Heart right ventricle (tissue), 16 donors: ENCODE measurements at regions of chr20 and their contacts with region 1.

Region 1: GRCh38 chr20:63657937-63658748 is at the start of gene RTEL1:
- DNase-seq: peak; percentile 92
- ATAC-seq: peak; percentile 94 to 98 (median 96)
- H3K4me3 ChIP-seq: peak within 1 kb of the TSS; percentile 38 to 89 (median 72)
- H3K27ac ChIP-seq: peak within 1 kb of the TSS; percentile 73 to 95 (median 90)
- H3K4me1 ChIP-seq: peaks cover 8 to 36% (median 29%) of the 10 kb centered on the region in 9 donors
- H3K27me3 ChIP-seq: peaks cover 0 to 3% (median 0%) of the 10 kb centered on the region in 7 donors
- CTCF ChIP-seq: peak in 1 of 9 donors; percentile 25
- total RNA-seq, gene RTEL1: 6.1 to 14.5 (median 10.3) TPM

Region 2: GRCh38 chr20:63553227-63553932 is 104.8 kb before region 1 on chr20:
- intact Hi-C with region 1: no loop called
- DNase-seq: peak; percentile 85
- ATAC-seq: peak; percentile 74 to 91 (median 82)
- H3K4me3 ChIP-seq: peak overlapping the region in 9 of 10 donors; percentile 46 to 69 (median 64)
- H3K27ac ChIP-seq: peak overlapping the region in 4 of 10 donors; percentile 21 to 70 (median 39)
- H3K4me1 ChIP-seq: peaks cover 0 to 19% (median 10%) of the 10 kb centered on the region in 9 donors
- H3K27me3 ChIP-seq: peaks cover 0 to 53% (median 17%) of the 10 kb centered on the region in 7 donors
- CTCF ChIP-seq: no peak

Region 3: DNA sequence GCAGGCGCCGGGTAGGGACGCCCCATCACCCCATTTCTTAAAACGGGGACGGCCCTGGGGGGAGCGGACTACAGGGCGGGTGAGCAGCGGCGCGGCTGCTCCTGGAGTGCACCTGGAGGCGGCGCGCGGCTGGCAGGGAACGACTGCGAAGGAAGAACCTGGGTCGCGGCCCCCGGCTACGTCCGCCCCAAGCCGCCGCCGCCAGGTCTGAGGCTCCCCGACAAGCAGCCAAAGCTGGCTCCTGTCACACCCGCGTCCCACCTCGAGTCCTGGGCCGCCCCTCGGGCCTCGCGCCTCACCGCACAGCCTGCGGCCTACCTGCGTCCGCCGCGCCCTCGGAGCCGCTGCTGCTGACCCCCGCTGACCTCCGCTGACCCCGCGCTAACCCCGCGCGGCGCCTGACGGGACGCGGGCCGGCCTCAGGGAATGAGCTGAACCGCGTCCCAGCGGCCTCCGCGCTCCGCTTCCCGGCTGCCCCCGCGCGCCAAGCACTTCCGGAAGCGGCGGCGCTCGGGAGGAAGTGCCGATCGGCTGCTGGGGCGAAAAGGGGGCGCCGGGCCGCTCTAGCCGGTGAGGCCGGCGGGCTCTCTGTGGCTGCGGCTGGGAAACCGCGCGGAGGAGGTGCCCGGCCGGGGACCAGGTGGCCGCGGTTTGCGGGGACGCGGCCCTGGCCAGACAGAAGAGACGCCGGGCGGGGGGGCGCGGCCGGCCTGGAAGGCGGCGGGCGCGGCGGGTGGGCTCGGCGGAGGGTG is 49.6 kb after region 1 on chr20 and contains the starts of genes ARFRP1 and ZGPAT:
- intact Hi-C with region 1: loop called in 2 of 10 experiments (anchors 1 to 5 kb)
- DNase-seq: peak; percentile 91 to 93
- ATAC-seq: peak; percentile 93 to 98 (median 96)
- H3K4me3 ChIP-seq: peak within 1 kb of the TSS; percentile 77 to 99 (median 94)
- H3K27ac ChIP-seq: peak within 1 kb of the TSS; percentile 84 to 98 (median 94)
- H3K4me1 ChIP-seq: peaks cover 6 to 45% (median 32%) of the 10 kb centered on the region in 9 donors
- H3K27me3 ChIP-seq: no peaks in the 10 kb centered on the region
- CTCF ChIP-seq: peak in 1 of 9 donors; percentile 7
- total RNA-seq, gene ARFRP1: 34.9 to 51.6 (median 38.8) TPM
- total RNA-seq, gene ZGPAT: 11.8 to 21.7 (median 14.7) TPM

Region 4: DNA sequence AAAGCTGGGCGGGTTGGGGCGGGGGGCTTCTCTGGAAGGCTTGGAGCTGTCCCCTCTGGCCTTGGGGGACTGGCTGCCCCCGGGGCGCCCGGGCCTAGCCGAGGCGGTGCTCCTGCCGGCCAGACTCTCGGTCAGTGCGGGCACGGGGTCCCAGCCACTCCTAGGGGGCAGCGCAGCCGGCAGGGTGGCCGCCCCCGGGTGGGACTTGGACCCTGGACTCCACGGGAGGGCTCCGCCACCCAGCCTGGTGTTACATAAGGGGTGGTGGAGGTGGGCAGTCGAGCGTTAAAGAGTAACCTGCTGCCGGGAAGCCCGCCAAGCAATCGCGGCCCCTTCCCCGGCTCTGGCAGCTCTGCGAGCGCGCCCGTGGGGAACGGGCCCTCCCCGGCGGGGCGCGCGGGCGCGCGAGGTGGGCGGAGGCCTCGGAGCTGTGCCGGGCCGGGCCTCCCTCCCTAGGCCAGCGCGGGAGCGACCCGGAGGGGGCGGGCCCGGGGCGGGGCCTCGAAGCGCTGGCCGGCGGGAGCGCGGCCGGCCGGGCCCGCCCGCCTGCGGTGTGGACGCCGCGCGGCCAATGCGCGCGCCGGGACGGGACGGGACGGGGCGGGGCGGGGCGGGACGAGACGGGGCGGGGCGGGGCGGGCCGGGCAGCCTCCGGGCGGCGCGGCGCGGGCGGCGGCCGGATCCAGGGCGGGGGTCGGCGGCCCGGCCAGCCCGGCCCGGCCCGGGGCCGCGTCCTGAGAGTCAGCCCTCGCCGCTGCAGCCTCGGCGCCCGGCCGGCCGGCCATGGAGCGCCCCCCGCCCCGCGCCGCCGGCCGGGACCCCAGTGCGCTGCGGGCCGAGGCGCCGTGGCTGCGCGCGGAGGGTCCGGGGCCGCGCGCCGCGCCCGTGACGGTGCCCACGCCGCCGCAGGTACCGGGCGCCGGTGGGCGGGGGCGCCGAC is 81.3 kb after region 1 on chr20 and contains the start of gene SLC2A4RG:
- intact Hi-C with region 1: loop called in 1 of 10 experiments (anchors 10 kb)
- DNase-seq: peak; percentile 79 to 85
- ATAC-seq: peak; percentile 60 to 82 (median 67)
- H3K4me3 ChIP-seq: peak within 1 kb of the TSS; percentile 38 to 86 (median 72)
- H3K27ac ChIP-seq: peak within 1 kb of the TSS; percentile 86 to 98 (median 95)
- H3K4me1 ChIP-seq: peaks cover 31 to 52% (median 38%) of the 10 kb centered on the region in 9 donors
- H3K27me3 ChIP-seq: peaks cover 0 to 19% (median 0%) of the 10 kb centered on the region in 7 donors
- CTCF ChIP-seq: no peak
- total RNA-seq, gene SLC2A4RG: 64.4 to 85.3 (median 76.8) TPM